Activated B cell treated with CpG ODN at 0.5 μM for 24 hours (primary cell): ENCODE measurements at regions of chr5 and their contacts with region 1.

Region 1: DNA sequence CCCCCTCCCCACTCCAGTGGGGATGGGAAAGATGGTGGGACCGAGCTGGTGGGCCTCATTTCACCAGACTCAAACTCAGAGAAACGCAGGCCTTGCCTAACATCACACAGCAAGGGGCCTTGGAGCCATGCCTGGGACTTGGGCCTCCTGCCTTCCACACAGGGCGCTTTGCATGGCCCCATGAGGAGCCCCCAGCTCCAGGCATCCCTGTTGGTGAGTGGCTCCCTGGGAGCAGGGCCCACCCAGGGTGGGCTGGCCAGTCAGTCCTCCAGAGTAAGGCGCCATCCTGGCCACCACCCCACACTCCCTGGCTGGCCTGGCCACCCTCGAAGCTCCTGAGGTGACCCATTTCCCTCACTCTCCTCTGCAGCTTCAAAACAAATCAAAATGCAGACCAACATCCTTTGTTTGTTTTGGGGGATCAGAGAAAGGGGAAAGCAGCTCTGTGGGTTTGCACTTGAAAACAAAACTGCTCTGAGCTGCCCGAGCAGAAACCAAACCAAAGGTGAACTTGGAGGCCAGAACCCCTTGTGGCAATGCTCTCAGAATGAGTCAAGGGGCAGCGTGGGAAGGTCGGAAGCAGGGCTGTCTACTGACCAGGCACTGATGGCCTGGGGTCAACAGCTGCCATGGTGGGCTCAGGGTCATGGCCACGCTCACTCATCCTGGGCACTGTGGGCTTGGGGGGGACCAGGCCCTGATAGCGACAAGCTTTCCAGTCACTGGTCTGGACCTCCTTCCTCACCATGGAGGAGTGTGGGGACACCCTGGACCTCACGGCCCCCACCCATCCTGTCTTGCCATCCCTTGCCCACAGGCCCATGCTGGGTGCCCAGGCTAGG is 37.0 kb upstream of the VDAC1 start:
- DNase-seq: no peak
- ATAC-seq: no peak
- H3K4me3 Mint-ChIP-seq: no peak overlapping the region
- H3K27ac Mint-ChIP-seq: no peak overlapping the region
- H3K4me1 Mint-ChIP-seq: peaks cover 4% of the 10 kb centered on the region
- H3K27me3 Mint-ChIP-seq: no peaks in the 10 kb centered on the region
- CTCF ChIP-seq: no peak

Region 2: DNA sequence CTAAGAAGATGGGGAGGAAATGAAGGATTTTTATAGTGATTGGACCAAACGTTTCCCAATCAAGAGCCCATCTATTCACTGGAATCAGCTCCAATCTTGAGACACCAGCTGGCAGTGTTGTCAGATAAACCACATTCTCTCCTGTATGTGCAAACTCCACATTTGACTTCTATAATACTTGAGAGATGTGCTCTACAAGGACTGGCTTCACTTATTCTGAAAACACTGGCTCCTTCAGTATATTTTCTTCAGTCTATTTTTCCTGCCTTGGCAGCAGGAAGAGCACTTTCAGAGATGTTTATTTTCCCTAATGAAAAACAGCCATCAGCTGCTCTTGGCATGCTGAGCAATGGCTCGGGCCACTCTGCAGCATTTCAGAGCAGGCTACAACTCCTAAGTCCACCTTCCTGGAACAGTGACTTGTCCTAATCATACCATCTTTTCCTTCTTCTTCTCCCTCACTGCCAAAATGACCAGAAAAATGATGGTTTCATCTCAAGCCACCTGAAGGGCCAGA is 332.5 kb before region 1 on chr5:
- CTCF ChIA-PET with region 1: no interaction called
- POLR2A ChIA-PET with region 1: no interaction called
- intact Hi-C with region 1: no loop called
- DNase-seq: no peak
- ATAC-seq: no peak
- H3K4me3 Mint-ChIP-seq: no peak overlapping the region
- H3K27ac Mint-ChIP-seq: no peak overlapping the region
- H3K4me1 Mint-ChIP-seq: no peaks in the 10 kb centered on the region
- H3K27me3 Mint-ChIP-seq: peaks cover 10% of the 10 kb centered on the region
- CTCF ChIP-seq: no peak

Region 3: DNA sequence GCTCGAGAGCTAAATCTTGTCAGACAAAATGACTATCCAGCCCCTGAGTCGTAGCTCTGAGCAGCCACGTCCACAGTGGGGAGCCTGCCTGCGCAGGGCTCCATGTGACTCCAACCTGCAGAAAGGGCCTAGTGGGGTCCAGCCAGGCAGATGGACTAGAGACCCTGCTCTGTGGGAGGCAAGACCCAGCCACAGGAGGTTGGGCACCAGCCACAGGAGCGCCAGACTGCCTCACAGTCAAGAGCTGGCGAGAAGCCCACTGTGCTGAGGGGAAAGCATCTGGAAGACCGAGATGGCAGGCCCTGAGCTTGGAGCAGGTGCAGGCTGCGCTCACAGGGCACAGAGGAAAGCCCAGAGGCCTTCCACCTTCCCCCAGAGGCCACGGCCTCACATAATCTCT is 134.7 kb before region 1 on chr5:
- CTCF ChIA-PET with region 1: interaction called, 3 read pairs
- POLR2A ChIA-PET with region 1: no interaction called
- intact Hi-C with region 1: loop called (anchors 1 kb)
- DNase-seq: no peak
- ATAC-seq: no peak
- H3K4me3 Mint-ChIP-seq: no peak overlapping the region
- H3K27ac Mint-ChIP-seq: no peak overlapping the region
- H3K4me1 Mint-ChIP-seq: peaks cover 14% of the 10 kb centered on the region
- H3K27me3 Mint-ChIP-seq: no peaks in the 10 kb centered on the region
- CTCF ChIP-seq: no peak

Region 4: DNA sequence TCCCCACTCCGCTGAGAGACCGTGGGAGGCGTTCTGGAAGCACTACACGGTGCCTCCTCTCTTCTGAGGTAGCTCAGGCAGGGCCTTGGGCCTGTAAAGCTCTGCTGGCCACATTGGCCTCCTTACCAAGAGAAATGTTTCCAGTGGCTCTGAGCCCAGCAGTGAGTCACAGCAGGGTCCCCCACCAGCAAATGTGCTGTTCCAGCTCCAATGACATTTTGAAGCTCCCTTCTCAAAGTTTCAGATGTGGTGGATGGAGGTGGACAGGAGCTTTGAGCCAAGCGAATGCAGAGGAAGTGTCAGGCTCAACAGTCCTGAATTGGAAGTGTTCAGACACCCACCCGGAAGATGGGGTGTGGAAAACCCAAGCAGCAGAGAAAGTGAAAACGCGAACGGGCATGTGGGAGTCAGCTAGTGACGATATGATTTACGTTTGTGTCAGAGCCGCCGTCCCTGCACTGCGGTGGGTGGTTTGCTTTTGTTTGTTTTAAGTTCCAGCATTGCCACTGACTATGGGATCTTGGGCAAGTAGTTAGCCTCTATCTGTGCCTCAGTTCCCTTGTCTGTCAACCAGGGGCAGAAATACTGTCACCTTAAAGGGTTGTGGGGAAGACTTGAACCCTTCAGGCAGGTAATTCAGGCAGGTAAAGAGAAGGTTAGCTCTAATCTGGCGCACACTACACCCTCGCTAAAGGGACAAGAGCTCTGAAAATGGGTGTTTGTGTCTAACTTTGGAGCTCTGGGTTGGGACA is 111.6 kb before region 1 on chr5:
- CTCF ChIA-PET with region 1: no interaction called
- POLR2A ChIA-PET with region 1: no interaction called
- intact Hi-C with region 1: no loop called
- DNase-seq: peak; percentile 35
- ATAC-seq: peak; percentile 6
- H3K4me3 Mint-ChIP-seq: peak overlapping the region; percentile 72
- H3K27ac Mint-ChIP-seq: peak overlapping the region; percentile 96
- H3K4me1 Mint-ChIP-seq: peaks cover 86% of the 10 kb centered on the region
- H3K27me3 Mint-ChIP-seq: no peaks in the 10 kb centered on the region
- CTCF ChIP-seq: no peak

Region 5: DNA sequence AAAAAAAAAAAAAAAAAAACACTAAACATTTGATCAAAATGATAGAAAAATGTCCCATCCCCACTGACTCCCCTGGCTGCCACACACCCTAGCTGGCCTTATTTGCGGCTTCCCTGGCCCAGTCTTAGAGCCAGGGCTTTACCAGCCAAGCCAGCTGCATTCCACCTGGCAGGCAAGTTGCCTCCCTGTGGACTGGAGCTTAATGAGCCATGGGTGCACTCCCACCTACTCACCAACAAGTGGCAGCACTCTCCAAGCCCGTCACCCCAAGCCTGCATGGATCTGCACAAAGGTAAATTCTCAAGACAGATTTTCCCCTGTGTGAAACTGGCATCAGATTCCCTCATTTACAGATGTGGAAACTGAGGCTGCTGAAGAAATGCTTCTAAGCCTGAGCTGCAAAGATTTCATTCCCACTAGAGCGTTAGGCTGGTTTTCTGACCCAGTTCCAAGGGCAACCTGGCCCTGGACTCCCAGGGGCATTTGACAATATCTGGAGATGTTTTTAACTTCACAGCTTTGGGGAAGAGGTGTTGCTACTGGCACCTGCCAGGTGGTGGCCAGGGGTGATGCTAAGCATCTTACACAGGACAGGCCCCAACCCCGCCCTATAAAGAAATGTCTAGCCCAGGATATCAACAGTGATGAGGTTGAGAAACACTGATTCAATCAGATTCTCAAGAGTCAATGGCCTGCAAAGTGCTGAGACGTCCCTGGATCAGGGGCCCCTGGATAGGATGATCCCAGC is 15.1 kb before region 1 on chr5:
- CTCF ChIA-PET with region 1: interaction called, 33 read pairs
- POLR2A ChIA-PET with region 1: no interaction called
- intact Hi-C with region 1: loop called (anchors 1 kb)
- DNase-seq: no peak
- ATAC-seq: peak; percentile 84
- H3K4me3 Mint-ChIP-seq: no peak overlapping the region
- H3K27ac Mint-ChIP-seq: no peak overlapping the region
- H3K4me1 Mint-ChIP-seq: peaks cover 19% of the 10 kb centered on the region
- H3K27me3 Mint-ChIP-seq: no peaks in the 10 kb centered on the region
- CTCF ChIP-seq: no peak

Region 6: GRCh38 chr5:134140530-134141201 is 98.9 kb after region 1 on chr5:
- CTCF ChIA-PET with region 1: interaction called, 502 read pairs
- POLR2A ChIA-PET with region 1: interaction called, 26 read pairs
- intact Hi-C with region 1: loop called (anchors 1 kb)
- DNase-seq: peak; percentile 41
- ATAC-seq: peak; percentile 68
- H3K4me3 Mint-ChIP-seq: no peak overlapping the region
- H3K27ac Mint-ChIP-seq: peak overlapping the region; percentile 68
- H3K4me1 Mint-ChIP-seq: peaks cover 47% of the 10 kb centered on the region
- H3K27me3 Mint-ChIP-seq: no peaks in the 10 kb centered on the region
- CTCF ChIP-seq: peak; percentile 31

Region 7: DNA sequence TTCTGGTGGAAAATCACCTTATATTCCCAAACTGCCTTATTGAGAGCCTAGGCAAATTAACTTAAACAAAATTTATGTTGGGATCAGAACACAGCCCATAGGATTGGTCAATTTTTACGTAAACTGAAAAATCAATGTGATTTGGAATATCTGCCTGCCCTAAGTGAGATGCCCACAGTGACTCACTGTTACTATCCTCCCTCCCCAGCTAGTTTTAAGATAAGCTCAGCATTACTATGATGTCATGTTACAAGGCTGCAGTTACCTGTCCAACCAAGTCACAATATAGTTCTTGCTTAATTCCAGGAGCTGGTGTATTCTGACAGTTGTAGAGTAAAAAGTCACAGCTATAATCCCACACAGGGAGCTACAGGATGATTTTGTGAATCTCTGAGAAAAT is 111.9 kb after region 1 on chr5:
- CTCF ChIA-PET with region 1: interaction called, 502 read pairs
- POLR2A ChIA-PET with region 1: no interaction called
- intact Hi-C with region 1: no loop called
- DNase-seq: no peak
- ATAC-seq: no peak
- H3K4me3 Mint-ChIP-seq: no peak overlapping the region
- H3K27ac Mint-ChIP-seq: no peak overlapping the region
- H3K4me1 Mint-ChIP-seq: no peaks in the 10 kb centered on the region
- H3K27me3 Mint-ChIP-seq: no peaks in the 10 kb centered on the region
- CTCF ChIP-seq: no peak

Region 8: GRCh38 chr5:134477462-134478250 is 435.9 kb after region 1 on chr5:
- CTCF ChIA-PET with region 1: no interaction called
- POLR2A ChIA-PET with region 1: no interaction called
- intact Hi-C with region 1: no loop called
- DNase-seq: no peak
- ATAC-seq: no peak
- H3K4me3 Mint-ChIP-seq: no peak overlapping the region
- H3K27ac Mint-ChIP-seq: no peak overlapping the region
- H3K4me1 Mint-ChIP-seq: no peaks in the 10 kb centered on the region
- H3K27me3 Mint-ChIP-seq: no peaks in the 10 kb centered on the region
- CTCF ChIP-seq: no peak

Region 9: GRCh38 chr5:135473927-135474641 is 1432.3 kb after region 1 on chr5:
- CTCF ChIA-PET with region 1: no interaction called
- POLR2A ChIA-PET with region 1: no interaction called
- intact Hi-C with region 1: no loop called
- DNase-seq: no peak
- ATAC-seq: no peak
- H3K4me3 Mint-ChIP-seq: no peak overlapping the region
- H3K27ac Mint-ChIP-seq: no peak overlapping the region
- H3K4me1 Mint-ChIP-seq: no peaks in the 10 kb centered on the region
- H3K27me3 Mint-ChIP-seq: peaks cover 17% of the 10 kb centered on the region
- CTCF ChIP-seq: no peak